T-cell (primary cell): ENCODE measurements at regions of chr12 and their contacts with region 1.

Region 1: DNA sequence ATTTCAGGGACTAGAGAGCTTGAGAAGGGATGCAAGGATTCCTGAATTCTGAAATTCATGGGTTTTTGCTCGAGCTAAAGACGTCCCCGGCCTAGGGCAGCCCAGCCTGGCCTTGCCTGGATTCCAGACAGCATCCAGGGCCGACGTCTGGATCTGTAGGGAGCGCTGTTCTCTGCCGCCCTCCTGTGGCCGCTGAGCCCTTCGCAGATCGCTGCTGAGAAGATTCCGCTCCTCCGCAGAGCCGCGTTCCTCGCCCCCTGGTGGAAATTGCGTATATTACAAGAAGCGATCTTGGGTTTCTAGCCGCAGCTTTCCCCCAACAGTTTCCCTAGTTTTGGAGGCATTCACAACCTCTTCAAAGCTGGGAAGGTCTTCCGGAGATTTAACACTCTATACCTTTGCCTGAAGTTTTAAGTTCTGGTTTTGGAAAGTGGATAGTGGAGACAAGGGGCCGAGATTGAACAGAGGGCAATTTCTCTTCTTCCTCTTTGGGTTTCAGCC is 5.1 kb downstream of the CISTR start:
- DNase-seq: peak; percentile 64 to 95 (median 82)
- ATAC-seq: peak; percentile 74 to 87 (median 80)
- H3K4me3 ChIP-seq: no peak overlapping the region
- H3K4me3 Mint-ChIP-seq: no peak overlapping the region
- H3K27ac ChIP-seq: no peak overlapping the region
- H3K27ac Mint-ChIP-seq: no peak overlapping the region
- H3K4me1 ChIP-seq: peaks cover 7 to 41% of the 10 kb centered on the region in 2 experiments
- H3K4me1 Mint-ChIP-seq: peaks cover 14 to 25% (median 19%) of the 10 kb centered on the region in 3 donors
- H3K27me3 ChIP-seq: peaks cover 14 to 78% of the 10 kb centered on the region in 2 experiments
- H3K27me3 Mint-ChIP-seq: peaks cover 21 to 46% of the 10 kb centered on the region in 2 donors

Region 2: DNA sequence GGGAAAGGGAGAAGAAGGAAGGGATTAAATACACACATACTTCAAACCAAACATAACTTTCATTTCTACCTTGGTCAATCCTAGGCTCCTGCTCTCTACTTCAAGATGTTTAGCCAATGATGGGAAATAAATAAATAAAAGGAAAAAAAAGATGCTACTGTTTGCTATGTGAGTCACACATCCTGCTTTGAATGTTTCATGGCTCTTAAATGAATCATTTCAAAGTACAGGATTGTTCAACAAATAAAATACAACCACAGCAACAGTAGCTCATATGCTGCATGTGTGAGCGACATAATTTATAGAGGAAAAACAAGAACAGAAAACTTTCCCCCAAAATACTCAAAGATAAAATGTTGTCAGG is 185.1 kb before region 1 on chr12:
- CTCF ChIA-PET with region 1: no interaction called
- POLR2A ChIA-PET with region 1: no interaction called
- DNase-seq: no peak
- ATAC-seq: peak in 3 of 4 experiments; percentile 54 to 75 (median 62)
- H3K4me3 ChIP-seq: no peak overlapping the region
- H3K4me3 Mint-ChIP-seq: no peak overlapping the region
- H3K27ac ChIP-seq: no peak overlapping the region
- H3K27ac Mint-ChIP-seq: peak overlapping the region; percentile 31 to 32
- H3K4me1 ChIP-seq: peaks cover 16 to 23% of the 10 kb centered on the region in 2 experiments
- H3K4me1 Mint-ChIP-seq: peaks cover 45 to 52% (median 52%) of the 10 kb centered on the region in 3 donors
- H3K27me3 ChIP-seq: no peaks in the 10 kb centered on the region
- H3K27me3 Mint-ChIP-seq: no peaks in the 10 kb centered on the region

Region 3: GRCh38 chr12:53643232-53643979 is 103.2 kb before region 1 on chr12:
- CTCF ChIA-PET with region 1: no interaction called
- POLR2A ChIA-PET with region 1: no interaction called
- DNase-seq: no peak
- ATAC-seq: no peak
- H3K4me3 ChIP-seq: no peak overlapping the region
- H3K4me3 Mint-ChIP-seq: no peak overlapping the region
- H3K27ac ChIP-seq: no peak overlapping the region
- H3K27ac Mint-ChIP-seq: no peak overlapping the region
- H3K4me1 ChIP-seq: no peaks in the 10 kb centered on the region
- H3K4me1 Mint-ChIP-seq: no peaks in the 10 kb centered on the region
- H3K27me3 ChIP-seq: no peaks in the 10 kb centered on the region
- H3K27me3 Mint-ChIP-seq: peaks cover 2 to 3% of the 10 kb centered on the region in 2 donors

Region 4: DNA sequence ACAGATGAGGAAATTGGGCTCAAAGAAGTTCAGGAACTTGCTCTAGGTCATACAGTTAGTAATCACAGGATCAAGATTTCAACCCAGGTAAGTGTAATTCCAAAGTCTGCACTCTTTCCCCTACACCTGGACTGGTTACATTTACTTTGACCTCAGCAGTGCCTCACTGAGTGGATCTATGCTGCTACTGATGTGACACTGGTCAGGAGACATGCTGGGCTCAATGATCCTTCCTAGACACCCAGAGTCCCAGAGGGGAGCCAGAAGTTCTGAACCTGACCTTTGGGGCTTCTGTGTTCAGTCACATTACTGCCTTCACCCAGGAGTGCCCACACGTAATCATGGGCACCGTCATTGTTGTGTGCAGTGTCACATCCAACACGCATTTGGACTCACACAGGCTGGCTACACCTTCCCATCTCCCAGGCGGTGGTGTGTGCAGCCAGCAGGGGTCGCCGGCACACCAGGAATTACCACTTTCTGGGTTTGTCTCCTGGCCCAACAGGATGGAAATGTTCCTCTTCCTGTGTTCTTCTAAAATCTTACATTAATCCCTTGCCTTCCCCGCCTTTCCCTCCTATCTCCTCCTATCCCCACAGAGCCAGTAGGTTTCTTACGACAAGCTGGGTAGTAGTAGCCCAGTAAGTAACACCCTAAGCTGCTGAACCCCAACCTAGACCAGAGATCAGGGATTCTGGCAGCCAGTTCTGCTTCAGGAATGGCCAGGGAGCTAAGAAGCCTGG is 45.0 kb before region 1 on chr12:
- CTCF ChIA-PET with region 1: interaction called, 28 to 71 read pairs
- POLR2A ChIA-PET with region 1: interaction called, 3 to 5 read pairs
- DNase-seq: peak; percentile 22 to 83 (median 65)
- ATAC-seq: peak; percentile 83 to 95 (median 91)
- H3K4me3 ChIP-seq: no peak overlapping the region
- H3K4me3 Mint-ChIP-seq: no peak overlapping the region
- H3K27ac ChIP-seq: no peak overlapping the region
- H3K27ac Mint-ChIP-seq: no peak overlapping the region
- H3K4me1 ChIP-seq: peaks cover 0 to 7% of the 10 kb centered on the region in 2 experiments
- H3K4me1 Mint-ChIP-seq: peaks cover 4 to 13% (median 4%) of the 10 kb centered on the region in 3 donors
- H3K27me3 ChIP-seq: peaks cover 34 to 61% of the 10 kb centered on the region in 2 experiments
- H3K27me3 Mint-ChIP-seq: peaks cover 79 to 87% of the 10 kb centered on the region in 2 donors

Region 5: GRCh38 chr12:53727310-53728041 is 19.2 kb before region 1 on chr12 and contains the start of gene CALCOCO1:
- CTCF ChIA-PET with region 1: interaction called, 24 to 28 read pairs
- POLR2A ChIA-PET with region 1: interaction called in 1 of 2 experiments, 3 read pairs
- DNase-seq: peak; percentile 87 to 99 (median 98)
- ATAC-seq: peak; percentile 92 to 100 (median 98)
- H3K4me3 ChIP-seq: peak within 1 kb of the TSS; percentile 78 to 82
- H3K4me3 Mint-ChIP-seq: peak within 1 kb of the TSS; percentile 91 to 94 (median 92)
- H3K27ac ChIP-seq: peak within 1 kb of the TSS; percentile 82
- H3K27ac Mint-ChIP-seq: peak within 1 kb of the TSS; percentile 90 to 91
- H3K4me1 ChIP-seq: peaks cover 2 to 29% of the 10 kb centered on the region in 2 experiments
- H3K4me1 Mint-ChIP-seq: peaks cover 31 to 32% (median 31%) of the 10 kb centered on the region in 3 donors
- H3K27me3 ChIP-seq: no peaks in the 10 kb centered on the region
- H3K27me3 Mint-ChIP-seq: no peaks in the 10 kb centered on the region
- total RNA-seq, gene CALCOCO1: 118 to 162 (median 153) TPM

Region 6: DNA sequence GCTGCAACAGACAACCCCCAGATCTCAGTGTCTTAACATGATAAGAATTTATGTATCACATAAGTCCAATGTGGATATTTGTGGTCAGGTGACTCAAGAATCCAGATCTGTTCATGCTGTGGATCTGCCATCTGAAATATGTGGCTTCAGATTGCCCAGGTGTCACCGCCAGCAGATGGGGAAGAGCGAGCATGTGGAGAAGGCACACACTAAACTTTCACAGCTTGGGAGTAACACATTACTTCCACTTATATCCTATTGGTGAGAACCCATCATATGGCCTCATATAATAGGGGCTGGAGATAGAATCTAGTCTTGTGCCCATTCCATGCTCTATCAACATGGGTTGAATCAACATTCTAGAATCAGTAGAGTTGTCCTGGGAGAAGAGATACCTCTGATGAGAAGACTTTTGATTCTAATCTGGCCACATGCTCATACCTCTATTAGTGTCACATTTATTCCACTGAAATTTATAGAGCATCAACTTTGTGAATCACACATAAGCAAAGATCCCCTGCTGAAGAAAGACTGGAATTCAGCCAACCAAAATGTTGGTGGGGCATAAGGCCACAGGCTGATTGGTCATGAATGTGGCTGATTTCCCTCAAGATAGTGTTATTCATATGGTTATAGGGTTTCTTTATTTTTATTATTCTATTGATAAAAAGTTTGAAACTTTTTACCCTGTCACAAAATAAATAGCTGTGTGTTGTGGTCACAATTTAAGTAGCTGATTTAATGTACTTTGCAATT is 13.4 kb before region 1 on chr12:
- CTCF ChIA-PET with region 1: interaction called, 24 to 28 read pairs
- POLR2A ChIA-PET with region 1: interaction called in 1 of 2 experiments, 3 read pairs
- DNase-seq: no peak
- ATAC-seq: no peak
- H3K4me3 ChIP-seq: no peak overlapping the region
- H3K4me3 Mint-ChIP-seq: no peak overlapping the region
- H3K27ac ChIP-seq: no peak overlapping the region
- H3K27ac Mint-ChIP-seq: no peak overlapping the region
- H3K4me1 ChIP-seq: peaks cover 0 to 3% of the 10 kb centered on the region in 2 experiments
- H3K4me1 Mint-ChIP-seq: peaks cover 10 to 13% (median 12%) of the 10 kb centered on the region in 3 donors
- H3K27me3 ChIP-seq: peaks cover 2 to 32% of the 10 kb centered on the region in 2 experiments
- H3K27me3 Mint-ChIP-seq: peaks cover 3 to 29% of the 10 kb centered on the region in 2 donors

Region 7: DNA sequence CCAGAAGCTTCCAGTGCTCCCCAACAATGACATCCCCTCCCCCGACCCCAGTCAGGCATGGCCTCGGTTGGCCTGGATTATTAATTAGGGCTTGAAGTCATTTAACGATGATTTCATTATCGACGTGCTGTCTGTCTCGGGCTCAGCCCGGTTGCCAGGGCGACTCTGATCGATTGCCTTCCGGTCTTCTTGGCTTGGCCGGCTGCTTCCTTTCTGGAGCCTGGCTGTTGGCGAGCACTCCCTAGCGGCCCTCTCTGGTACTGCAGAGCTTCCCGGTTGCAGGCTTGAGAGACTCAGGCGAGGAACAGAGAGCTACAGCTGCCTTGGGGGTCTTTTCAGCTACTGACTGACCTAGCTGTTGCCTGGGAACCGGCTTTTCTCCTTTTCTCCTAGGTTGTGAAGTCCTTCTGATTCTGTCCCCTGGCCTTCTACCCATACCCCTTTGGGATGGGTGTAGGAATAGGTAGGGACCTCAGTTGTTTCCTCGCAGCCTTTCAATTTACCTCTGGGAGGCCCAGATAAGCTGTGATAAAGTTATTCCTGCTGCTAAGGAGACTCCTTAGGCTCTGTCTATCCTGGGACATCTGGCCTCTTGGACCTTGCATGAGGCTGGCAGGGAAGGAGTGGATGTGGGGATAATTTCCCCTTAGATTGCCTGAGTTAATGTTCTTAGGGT is 10.6 kb after region 1 on chr12:
- CTCF ChIA-PET with region 1: interaction called, 6 to 36 read pairs
- POLR2A ChIA-PET with region 1: interaction called in 1 of 2 experiments, 7 read pairs
- DNase-seq: peak; percentile 47 to 88 (median 72)
- ATAC-seq: peak; percentile 78 to 89 (median 80)
- H3K4me3 ChIP-seq: no peak overlapping the region
- H3K4me3 Mint-ChIP-seq: peak overlapping the region in 1 of 3 donors; percentile 29
- H3K27ac ChIP-seq: no peak overlapping the region
- H3K27ac Mint-ChIP-seq: no peak overlapping the region
- H3K4me1 ChIP-seq: peaks cover 2 to 15% of the 10 kb centered on the region in 2 experiments
- H3K4me1 Mint-ChIP-seq: peaks cover 5 to 21% (median 19%) of the 10 kb centered on the region in 3 donors
- H3K27me3 ChIP-seq: peaks cover 28 to 58% of the 10 kb centered on the region in 2 experiments
- H3K27me3 Mint-ChIP-seq: peaks cover 42 to 45% of the 10 kb centered on the region in 2 donors